ENCODE measurements at regions of chr10 and their contacts with region 1.

Region 1: GRCh38 chr10:96229568-96230030 is 41.8 kb downstream of the BLNK start:
- DNase-seq: peak; percentile 91
- ATAC-seq: peak; percentile 60

Region 2: GRCh38 chr10:96275685-96276418 is 46.3 kb after region 1 on chr10:
- intact Hi-C with region 1: loop called (anchors 5 kb)
- DNase-seq: no peak
- ATAC-seq: peak; percentile 64

Region 3: GRCh38 chr10:96292971-96293920 is 63.6 kb after region 1 on chr10:
- intact Hi-C with region 1: loop called (anchors 1 kb)
- DNase-seq: no peak
- ATAC-seq: peak; percentile 76

Measured in Right ventricle myocardium inferior (tissue), 1 donor.